Right ventricle myocardium superior (tissue), 1 donor: ENCODE measurements at regions of chr18 and their contacts with region 1.

Region 1: DNA sequence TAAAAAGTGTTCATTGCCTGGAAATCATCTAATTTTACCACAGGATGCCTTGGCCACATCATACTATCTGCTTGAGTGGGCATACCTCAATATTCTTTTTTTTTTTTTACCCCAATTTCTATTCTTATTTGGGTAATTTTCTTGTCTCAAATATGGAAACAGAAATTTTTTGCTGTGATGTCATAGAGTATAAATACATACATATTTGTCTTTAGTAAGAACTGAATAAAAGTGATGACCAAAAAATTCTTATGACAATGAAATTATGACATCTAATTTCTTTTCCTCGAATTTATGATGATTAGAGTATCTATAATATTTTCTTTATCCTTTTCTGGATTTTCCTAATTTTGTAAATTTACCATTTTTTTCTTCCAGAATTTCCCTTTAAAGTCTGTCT is 177.8 kb downstream of the ADCYAP1 start:
- DNase-seq: no peak
- ATAC-seq: no peak

Region 2: DNA sequence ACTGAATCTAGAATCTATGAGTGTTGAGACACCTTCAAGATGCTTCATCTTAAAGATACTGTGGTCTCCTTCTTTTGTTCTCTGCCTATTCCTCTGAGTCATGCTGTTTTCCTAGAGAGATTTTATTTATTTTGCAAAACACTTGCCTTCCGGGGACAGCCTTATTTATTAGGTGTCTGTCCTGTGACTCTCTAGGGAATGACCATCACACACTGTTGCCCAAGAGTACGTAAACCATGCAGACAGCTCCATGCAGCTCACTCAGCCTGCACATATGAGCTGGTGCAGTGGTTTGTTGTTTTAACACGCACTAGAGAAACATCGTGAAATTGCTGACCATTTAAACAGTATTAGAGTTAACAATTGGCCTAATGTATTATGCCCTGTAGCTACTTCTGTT is 190.2 kb before region 1 on chr18:
- intact Hi-C with region 1: no loop called
- DNase-seq: no peak
- ATAC-seq: no peak

Region 3: GRCh38 chr18:1020731-1021344 is 61.7 kb before region 1 on chr18:
- intact Hi-C with region 1: loop called (anchors 10 kb)
- DNase-seq: no peak
- ATAC-seq: no peak

Region 4: DNA sequence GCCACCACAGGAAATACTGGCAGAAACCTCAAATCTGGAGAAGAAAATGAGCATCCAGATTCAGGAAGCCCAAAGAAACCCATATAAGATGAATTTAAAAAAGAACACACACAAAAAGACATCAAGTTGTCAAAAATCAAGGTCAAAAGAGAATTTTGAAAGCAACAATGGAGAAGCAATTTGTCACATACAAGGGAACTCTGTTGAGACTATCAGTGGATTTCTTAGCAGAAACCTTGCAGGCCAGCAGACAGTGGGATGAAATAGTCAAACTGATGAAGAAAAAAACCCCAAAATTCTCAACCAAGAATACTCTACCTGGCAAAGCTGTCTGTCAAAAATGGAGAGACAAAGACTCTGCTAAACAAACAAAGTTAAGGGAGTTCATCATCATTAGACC is 94.7 kb after region 1 on chr18:
- intact Hi-C with region 1: no loop called
- DNase-seq: no peak
- ATAC-seq: no peak